Caco-2 (cell line): ENCODE measurements at regions of chr11 and their contacts with region 1.

Region 1: DNA sequence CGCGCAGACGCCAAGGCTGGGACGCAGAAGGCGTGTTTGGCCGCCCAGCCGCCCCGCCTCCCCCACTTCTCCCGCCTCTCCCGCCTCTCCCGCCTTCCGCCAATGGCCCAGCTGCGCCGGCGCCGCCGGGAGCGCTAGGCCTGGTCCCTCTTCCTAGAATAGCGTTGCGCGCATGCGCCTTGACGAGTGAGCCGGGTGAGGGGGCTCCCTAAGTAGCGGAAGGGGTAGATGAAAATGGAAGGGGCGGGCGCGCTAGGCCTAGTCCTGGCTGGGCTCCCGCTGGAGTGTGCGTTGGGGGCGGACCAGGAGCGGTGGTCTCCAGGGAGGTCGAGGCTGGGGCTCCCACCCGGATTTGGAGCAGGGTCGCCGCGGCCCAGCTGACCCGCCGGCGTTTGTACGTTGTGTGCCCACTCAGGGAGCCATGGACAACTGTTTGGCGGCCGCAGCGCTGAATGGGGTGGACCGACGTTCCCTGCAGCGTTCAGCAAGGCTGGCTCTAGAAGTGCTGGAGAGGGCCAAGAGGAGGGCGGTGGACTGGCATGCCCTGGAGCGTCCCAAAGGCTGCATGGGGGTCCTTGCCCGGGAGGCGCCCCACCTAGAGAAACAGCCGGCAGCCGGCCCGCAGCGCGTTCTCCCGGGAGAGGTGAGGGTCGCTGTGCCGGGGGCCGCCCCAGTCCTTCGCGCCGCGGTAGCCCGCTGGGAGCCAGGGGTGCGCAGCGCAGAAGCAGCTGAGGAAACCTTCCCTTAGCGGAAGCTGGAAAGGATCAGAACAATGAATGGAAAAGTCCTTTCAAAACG is at the start of gene AKIP1:
- DNase-seq: peak; percentile 94 to 95
- H3K4me3 ChIP-seq: peak within 1 kb of the TSS; percentile 64
- H3K4me3 Mint-ChIP-seq: peak within 1 kb of the TSS; percentile 75
- H3K27ac Mint-ChIP-seq: peak within 1 kb of the TSS; percentile 18
- H3K4me1 ChIP-seq: no peaks in the 10 kb centered on the region
- H3K4me1 Mint-ChIP-seq: peaks cover 8% of the 10 kb centered on the region
- H3K27me3 ChIP-seq: no peaks in the 10 kb centered on the region
- H3K27me3 Mint-ChIP-seq: peaks cover 7% of the 10 kb centered on the region
- CTCF ChIP-seq: no peak
- total RNA-seq, gene AKIP1: 28.7 and 32.6 TPM in 2 replicates

Region 2: DNA sequence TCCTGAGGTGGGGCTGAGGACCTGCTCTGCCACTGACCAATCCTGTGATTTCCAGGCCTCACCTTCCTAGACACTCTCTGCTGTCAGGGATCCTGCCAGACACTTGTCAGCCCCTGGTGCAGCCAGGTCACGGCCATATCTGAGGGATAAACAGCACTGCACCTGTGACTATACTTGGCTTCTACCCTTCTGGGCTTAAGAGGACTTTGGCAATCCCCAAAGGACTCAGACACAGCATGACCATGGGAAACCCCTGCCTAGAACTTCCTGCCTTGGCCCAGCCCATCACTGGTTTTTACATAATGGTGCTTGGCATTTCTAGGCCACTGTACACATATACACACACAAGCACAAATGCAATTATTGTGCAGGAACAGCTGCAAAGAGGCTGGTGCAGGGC is 1437.5 kb before region 1 on chr11:
- CTCF ChIA-PET with region 1: no interaction called
- POLR2A ChIA-PET with region 1: no interaction called
- intact Hi-C with region 1: loop called (anchors 5 kb)
- DNase-seq: no peak
- H3K4me3 ChIP-seq: no peak overlapping the region
- H3K4me3 Mint-ChIP-seq: no peak overlapping the region
- H3K27ac Mint-ChIP-seq: no peak overlapping the region
- H3K4me1 ChIP-seq: no peaks in the 10 kb centered on the region
- H3K4me1 Mint-ChIP-seq: no peaks in the 10 kb centered on the region
- H3K27me3 ChIP-seq: no peaks in the 10 kb centered on the region
- H3K27me3 Mint-ChIP-seq: peaks cover 13% of the 10 kb centered on the region
- CTCF ChIP-seq: no peak

Region 3: DNA sequence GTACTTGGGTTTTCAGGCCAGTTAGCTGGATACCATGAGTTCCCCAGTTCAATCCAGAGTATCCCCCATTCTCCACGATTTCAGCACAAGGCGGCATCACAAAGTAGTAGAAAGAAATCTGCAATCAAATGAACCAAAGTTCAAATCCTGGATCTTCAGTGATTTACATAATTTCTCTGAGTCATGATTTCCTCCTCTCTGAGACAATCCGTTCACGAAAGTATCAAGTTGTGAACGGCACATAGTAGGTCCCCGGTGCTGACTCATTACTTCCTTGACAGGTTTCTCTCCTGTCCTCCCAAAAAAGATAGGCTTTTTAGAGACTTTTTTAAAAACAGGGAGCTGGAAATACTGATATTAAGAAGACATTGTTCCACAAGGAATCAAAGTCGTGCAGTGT is 69.3 kb before region 1 on chr11:
- CTCF ChIA-PET with region 1: no interaction called
- POLR2A ChIA-PET with region 1: no interaction called
- intact Hi-C with region 1: no loop called
- DNase-seq: no peak
- H3K4me3 ChIP-seq: no peak overlapping the region
- H3K4me3 Mint-ChIP-seq: no peak overlapping the region
- H3K27ac Mint-ChIP-seq: no peak overlapping the region
- H3K4me1 ChIP-seq: peaks cover 30% of the 10 kb centered on the region
- H3K4me1 Mint-ChIP-seq: peaks cover 32% of the 10 kb centered on the region
- H3K27me3 ChIP-seq: no peaks in the 10 kb centered on the region
- H3K27me3 Mint-ChIP-seq: no peaks in the 10 kb centered on the region
- CTCF ChIP-seq: no peak

Region 4: GRCh38 chr11:8870411-8871170 is 40.6 kb before region 1 on chr11:
- CTCF ChIA-PET with region 1: no interaction called
- POLR2A ChIA-PET with region 1: interaction called, 8 read pairs
- intact Hi-C with region 1: loop called (anchors 2 kb)
- DNase-seq: peak; percentile 81 to 82
- H3K4me3 ChIP-seq: peak overlapping the region; percentile 70
- H3K4me3 Mint-ChIP-seq: peak overlapping the region; percentile 84
- H3K27ac Mint-ChIP-seq: peak overlapping the region; percentile 83
- H3K4me1 ChIP-seq: peaks cover 30% of the 10 kb centered on the region
- H3K4me1 Mint-ChIP-seq: peaks cover 15% of the 10 kb centered on the region
- H3K27me3 ChIP-seq: no peaks in the 10 kb centered on the region
- H3K27me3 Mint-ChIP-seq: no peaks in the 10 kb centered on the region
- CTCF ChIP-seq: no peak

Region 5: DNA sequence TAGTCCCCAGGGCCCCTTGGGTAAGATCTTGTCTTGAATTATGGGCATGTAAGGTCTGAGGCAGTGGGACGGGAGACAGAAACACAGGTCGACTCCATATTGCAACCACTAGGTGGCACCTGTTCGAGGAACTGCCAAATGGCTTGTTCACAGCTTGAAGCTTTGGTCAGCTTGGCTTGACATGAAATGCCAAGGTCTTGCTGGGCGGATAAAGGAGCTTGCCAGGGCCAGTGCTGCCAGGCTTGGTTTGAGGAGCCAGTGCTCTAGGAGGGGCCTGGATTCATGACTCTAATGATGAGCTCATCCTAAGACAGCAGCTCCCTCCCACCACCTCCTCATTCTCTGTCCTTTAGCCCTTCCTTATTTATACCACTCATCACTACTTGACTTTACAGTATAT is 104.4 kb after region 1 on chr11:
- CTCF ChIA-PET with region 1: no interaction called
- POLR2A ChIA-PET with region 1: no interaction called
- intact Hi-C with region 1: no loop called
- DNase-seq: peak; percentile 74
- H3K4me3 ChIP-seq: no peak overlapping the region
- H3K4me3 Mint-ChIP-seq: no peak overlapping the region
- H3K27ac Mint-ChIP-seq: no peak overlapping the region
- H3K4me1 ChIP-seq: no peaks in the 10 kb centered on the region
- H3K4me1 Mint-ChIP-seq: no peaks in the 10 kb centered on the region
- H3K27me3 ChIP-seq: no peaks in the 10 kb centered on the region
- H3K27me3 Mint-ChIP-seq: peaks cover 2% of the 10 kb centered on the region
- CTCF ChIP-seq: peak; percentile 72 to 88

Region 6: DNA sequence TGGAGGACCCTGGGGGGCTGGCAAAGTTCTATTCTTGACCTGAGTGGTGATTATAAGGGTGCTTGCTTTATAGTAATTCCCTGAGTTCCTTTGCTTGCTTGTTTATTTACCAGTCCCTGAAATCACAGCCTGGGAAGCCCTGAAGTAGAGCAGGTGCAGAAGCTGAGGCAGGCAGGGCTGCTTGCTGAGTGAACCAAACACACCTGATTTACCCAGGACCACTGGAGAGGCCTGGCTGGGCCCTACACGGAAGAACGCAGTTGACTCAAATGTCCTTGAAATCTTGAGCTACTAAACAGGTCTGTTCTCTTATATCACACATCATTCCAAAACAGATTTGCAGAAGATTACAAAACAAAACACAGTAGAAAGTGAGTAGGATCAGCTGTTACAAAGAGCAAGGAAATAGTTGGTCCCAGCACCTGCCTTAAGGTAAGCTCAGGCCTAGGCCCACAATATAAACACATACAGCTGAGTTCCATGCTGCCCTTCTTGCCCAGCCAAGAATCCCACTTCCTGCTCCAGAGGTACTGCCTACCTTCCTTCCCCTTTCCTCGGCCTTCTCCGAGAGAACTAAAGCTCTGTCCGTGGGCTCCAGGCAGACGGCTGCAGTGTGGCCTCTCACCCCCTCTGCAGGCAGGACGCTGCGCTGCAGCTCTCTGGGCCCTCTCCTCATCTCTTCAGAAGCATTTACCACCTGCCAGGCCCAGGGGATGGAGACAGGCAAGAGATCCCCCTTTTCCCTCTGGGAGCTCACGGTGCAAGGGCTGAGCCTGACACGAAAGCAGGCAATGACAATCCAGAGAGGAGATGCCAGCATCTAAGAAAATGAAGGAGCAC is 226.3 kb after region 1 on chr11:
- CTCF ChIA-PET with region 1: interaction called, 6 read pairs
- POLR2A ChIA-PET with region 1: no interaction called
- intact Hi-C with region 1: loop called (anchors 2 kb)
- DNase-seq: peak; percentile 77 to 85
- H3K4me3 ChIP-seq: no peak overlapping the region
- H3K4me3 Mint-ChIP-seq: no peak overlapping the region
- H3K27ac Mint-ChIP-seq: peak overlapping the region; percentile 62
- H3K4me1 ChIP-seq: no peaks in the 10 kb centered on the region
- H3K4me1 Mint-ChIP-seq: no peaks in the 10 kb centered on the region
- H3K27me3 ChIP-seq: no peaks in the 10 kb centered on the region
- H3K27me3 Mint-ChIP-seq: no peaks in the 10 kb centered on the region
- CTCF ChIP-seq: peak; percentile 95 to 99

Region 7: GRCh38 chr11:9158898-9159391 is 247.7 kb after region 1 on chr11:
- CTCF ChIA-PET with region 1: no interaction called
- POLR2A ChIA-PET with region 1: no interaction called
- intact Hi-C with region 1: no loop called
- DNase-seq: no peak
- H3K4me3 ChIP-seq: no peak overlapping the region
- H3K4me3 Mint-ChIP-seq: no peak overlapping the region
- H3K27ac Mint-ChIP-seq: no peak overlapping the region
- H3K4me1 ChIP-seq: no peaks in the 10 kb centered on the region
- H3K4me1 Mint-ChIP-seq: no peaks in the 10 kb centered on the region
- H3K27me3 ChIP-seq: no peaks in the 10 kb centered on the region
- H3K27me3 Mint-ChIP-seq: no peaks in the 10 kb centered on the region
- CTCF ChIP-seq: no peak